PC-3 (cell line): ENCODE measurements at regions of chr21 and their contacts with region 1.

Region 1: DNA sequence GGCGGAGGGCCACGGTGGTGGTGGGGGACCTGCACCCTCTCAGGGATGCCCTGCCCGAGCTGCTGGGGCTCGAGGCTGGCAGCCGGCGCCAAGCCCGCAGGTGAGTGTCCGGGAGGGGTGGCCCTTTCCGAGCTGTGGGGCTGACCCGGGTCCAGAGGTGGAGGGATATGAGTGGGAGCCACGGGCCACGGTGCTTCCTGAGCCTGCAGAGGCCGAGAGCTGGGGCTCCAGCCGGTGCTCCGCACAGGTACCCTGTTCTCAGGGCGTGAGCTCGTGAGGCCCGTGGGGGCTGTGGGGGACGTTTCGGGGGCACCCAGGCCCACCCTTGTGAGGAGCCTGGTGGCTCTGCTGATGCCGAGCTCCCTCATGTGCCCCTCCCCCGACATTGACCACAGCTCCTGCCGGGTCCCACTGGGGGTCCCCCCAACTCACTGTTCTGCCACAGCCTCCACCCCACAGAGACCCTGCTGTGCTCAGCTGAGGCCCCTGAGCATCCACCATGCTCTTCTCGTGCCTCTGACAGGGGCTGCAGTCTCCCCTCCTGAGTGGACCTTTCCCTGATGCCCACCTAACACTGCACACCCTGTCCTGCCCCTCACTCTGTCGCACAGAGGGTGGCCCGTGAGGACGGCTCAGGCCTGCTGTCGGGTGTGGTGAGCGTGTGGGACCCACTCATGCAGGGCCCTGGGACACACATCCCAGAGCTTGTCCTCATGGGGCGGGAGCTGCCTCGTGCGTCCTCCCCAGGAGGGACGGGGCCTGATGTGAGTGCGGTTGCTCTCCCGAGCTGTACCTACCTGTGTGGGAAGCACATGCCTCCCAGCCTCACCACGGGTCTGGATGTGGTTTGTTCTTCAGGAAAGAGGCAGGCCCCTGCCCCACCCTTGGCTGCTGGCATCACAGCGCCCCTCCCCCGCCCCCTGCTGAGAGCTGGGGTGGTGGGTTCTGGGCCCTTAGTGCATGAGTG is 27.5 kb downstream of the SLX9 start:
- DNase-seq: no peak
- ATAC-seq: no peak
- H3K4me3 ChIP-seq: no peak overlapping the region
- H3K27ac ChIP-seq: no peak overlapping the region
- H3K4me1 ChIP-seq: peaks cover 8% of the 10 kb centered on the region; the same call in 1 of the 2 replicates
- H3K27me3 ChIP-seq: no peaks in the 10 kb centered on the region
- CTCF ChIP-seq: no peak

Region 2: GRCh38 chr21:45050786-45051489 is 83.6 kb after region 1 on chr21:
- CTCF ChIA-PET with region 1: no interaction called
- POLR2A ChIA-PET with region 1: interaction called, 12 read pairs
- intact Hi-C with region 1: no loop called
- DNase-seq: peak; percentile 67
- ATAC-seq: peak; percentile 76
- H3K4me3 ChIP-seq: peak overlapping the region; percentile 4; the same call in 1 of the 2 replicates
- H3K27ac ChIP-seq: peak overlapping the region; percentile 89
- H3K4me1 ChIP-seq: peaks cover 16% of the 10 kb centered on the region
- H3K27me3 ChIP-seq: no peaks in the 10 kb centered on the region
- CTCF ChIP-seq: no peak